ENCODE measurements at regions of chr15 and their contacts with region 1.

Region 1: GRCh38 chr15:39874890-39875549 is 45.0 kb downstream of the GPR176 start:
- DNase-seq: no peak
- ATAC-seq: no peak

Region 2: GRCh38 chr15:39686000-39686613 is 188.9 kb before region 1 on chr15:
- intact Hi-C with region 1: loop called in 1 of 2 experiments (anchors 10 kb)
- DNase-seq: no peak
- ATAC-seq: peak; percentile 59 to 63

Region 3: DNA sequence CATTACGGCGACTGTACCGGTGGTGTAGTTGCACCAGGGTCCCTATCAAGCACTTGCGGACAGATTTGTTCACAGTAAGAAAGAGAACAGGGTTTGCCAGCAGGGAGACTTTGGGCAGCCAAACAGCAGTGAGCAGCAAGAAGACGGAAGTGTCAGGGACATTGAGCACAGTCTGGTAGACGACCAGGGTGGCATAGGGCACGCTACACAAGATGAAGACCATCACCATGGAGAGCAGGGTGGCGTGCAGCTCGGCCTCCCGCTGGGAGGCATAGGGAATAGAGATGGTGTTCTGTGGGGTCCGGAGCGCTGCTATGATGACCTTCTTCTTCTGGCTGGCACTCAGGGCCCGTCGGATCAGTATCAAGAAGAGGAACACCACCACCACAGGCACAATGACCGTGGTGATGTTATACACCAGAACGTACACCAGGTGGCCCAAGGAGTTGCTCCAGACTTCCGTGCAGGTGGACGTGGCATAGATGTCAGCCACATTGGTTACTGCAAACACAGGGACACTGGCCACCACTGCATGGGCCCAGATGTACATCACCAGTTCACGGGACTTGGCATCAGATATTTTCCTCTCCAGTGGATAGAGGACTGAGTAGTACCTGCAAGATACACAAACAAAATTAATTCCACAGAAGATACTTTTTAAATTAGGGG is 73.2 kb before region 1 on chr15:
- intact Hi-C with region 1: loop called in 1 of 2 experiments (anchors 10 kb)
- DNase-seq: no peak
- ATAC-seq: no peak